Ascending aorta (tissue), 2 donors: ENCODE measurements at regions of chr3 and their contacts with region 1.

Region 1: DNA sequence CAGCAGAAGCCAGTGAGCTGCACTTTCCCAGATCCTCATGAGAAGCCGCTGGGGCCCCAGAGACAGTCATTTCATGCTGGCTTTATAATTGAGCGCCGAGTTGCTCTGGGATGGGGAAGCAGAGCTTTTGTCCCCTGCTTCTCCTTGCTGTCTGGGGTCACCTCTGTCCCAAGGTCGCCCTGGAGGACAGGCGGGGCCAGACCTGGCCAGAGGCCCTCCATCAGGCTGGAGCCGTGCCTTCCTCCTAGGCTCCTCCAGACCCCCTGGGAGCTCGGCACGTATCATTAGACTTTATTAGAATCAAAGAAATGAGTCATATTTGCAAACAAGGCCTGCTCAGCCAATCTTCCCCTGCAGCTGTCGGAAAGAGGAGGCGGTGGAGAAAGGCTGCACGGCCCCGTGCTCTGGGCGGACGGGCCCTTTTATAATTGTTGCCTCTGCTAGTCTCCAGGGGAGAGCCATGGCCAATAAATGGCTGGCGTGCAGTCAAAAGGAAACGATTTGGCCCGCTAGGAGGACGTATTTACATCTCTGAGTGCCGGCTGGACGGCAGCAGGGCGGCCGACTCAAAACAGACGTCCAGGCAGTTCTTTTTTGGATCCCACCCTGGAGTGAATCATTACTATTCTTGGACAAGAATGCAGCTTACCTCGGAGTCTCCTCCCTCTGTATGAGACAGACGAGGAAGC is 50.4 kb downstream of the SLC6A6 start:
- DNase-seq: peak; percentile 88 to 96
- H3K4me3 ChIP-seq: peak overlapping the region in 1 of 2 donors; percentile 2
- H3K27ac ChIP-seq: peak overlapping the region; percentile 77 to 91
- H3K4me1 ChIP-seq: peaks cover 14 to 26% of the 10 kb centered on the region in 2 donors
- H3K27me3 ChIP-seq: no peaks in the 10 kb centered on the region
- CTCF ChIP-seq: no peak

Region 2: DNA sequence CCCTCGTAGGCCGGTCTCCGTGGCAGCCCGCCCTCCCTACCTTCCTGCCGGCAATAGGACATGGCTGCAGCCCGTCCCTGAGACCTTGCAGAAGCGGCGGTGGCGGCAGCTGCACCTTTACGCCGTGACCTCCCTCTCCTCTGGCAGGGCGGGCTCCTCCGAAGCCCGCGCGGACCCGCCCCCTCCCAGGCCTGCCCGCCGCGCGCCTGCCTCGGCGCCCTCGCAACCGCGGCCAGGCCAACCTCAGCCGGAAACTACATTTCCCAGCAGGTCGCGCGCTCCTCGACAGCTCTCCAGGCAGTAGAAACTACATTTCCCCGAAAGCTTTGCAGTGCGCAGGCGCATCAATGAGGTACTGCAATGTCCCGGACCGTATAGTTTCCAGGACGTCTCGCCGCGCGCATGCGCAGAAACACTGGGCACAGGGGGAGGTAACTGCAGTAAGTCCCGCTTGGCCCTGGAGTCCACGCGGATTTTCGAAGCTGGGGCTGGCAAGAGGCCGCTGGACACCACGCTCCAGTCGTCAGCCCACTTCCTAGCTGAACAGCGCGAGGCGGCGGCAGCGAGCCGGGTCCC is 328.1 kb before region 1 on chr3 and contains the starts of genes CHCHD4 and TMEM43:
- intact Hi-C with region 1: loop called (anchors 5 kb)
- DNase-seq: peak; percentile 98 to 100
- H3K4me3 ChIP-seq: peak within 1 kb of the TSS; percentile 84 to 100
- H3K27ac ChIP-seq: peak within 1 kb of the TSS; percentile 96 to 98
- H3K4me1 ChIP-seq: peaks cover 19 to 26% of the 10 kb centered on the region in 2 donors
- H3K27me3 ChIP-seq: no peaks in the 10 kb centered on the region
- CTCF ChIP-seq: peak in 1 of 3 experiments; percentile 2
- total RNA-seq, gene CHCHD4: 1.9 TPM
- total RNA-seq, gene TMEM43: 166 TPM

Region 3: DNA sequence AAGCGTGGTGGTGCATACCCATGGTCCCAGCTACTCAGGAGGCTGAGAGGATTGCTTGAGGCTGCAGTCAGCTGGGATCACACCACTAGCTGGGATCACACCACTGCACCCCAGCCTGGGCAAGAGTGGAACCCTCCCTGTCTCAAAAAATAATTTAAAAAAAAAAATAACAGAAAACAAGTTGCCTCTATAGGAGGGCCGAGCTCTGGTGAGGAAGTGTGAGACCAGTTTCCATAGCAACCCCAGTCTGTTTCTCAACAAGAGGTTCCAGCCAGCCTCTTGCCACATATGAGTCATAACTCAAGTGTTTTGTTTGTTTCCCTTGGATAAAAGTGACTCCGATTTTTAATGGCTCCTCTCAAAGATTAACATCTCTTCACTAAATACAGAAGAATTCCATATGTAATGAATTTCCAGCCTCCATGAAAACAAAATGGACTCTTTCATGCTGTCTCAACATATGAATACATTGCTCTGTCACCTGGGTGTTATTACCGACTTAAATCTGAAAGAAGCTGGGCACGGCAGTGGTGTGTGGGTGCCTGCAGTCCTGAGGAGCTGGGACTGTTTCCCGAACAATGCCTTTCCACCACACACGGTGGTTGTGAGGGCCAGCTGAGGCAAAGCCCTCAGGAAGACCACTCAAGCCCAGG is 308.3 kb before region 1 on chr3:
- intact Hi-C with region 1: loop called (anchors 5 kb)
- DNase-seq: peak; percentile 70 to 93
- H3K4me3 ChIP-seq: peak overlapping the region; percentile 33 to 38
- H3K27ac ChIP-seq: peak overlapping the region; percentile 89 to 91
- H3K4me1 ChIP-seq: peaks cover 31 to 49% of the 10 kb centered on the region in 2 donors
- H3K27me3 ChIP-seq: no peaks in the 10 kb centered on the region
- CTCF ChIP-seq: no peak

Region 4: GRCh38 chr3:14402304-14402811 is 50.5 kb before region 1 on chr3 and contains the start of gene SLC6A6:
- intact Hi-C with region 1: loop called (anchors 1 kb)
- DNase-seq: peak; percentile 88 to 98
- H3K4me3 ChIP-seq: peak within 1 kb of the TSS; percentile 62 to 85
- H3K27ac ChIP-seq: peak within 1 kb of the TSS; percentile 77 to 85
- H3K4me1 ChIP-seq: peaks cover 25 to 33% of the 10 kb centered on the region in 2 donors
- H3K27me3 ChIP-seq: no peaks in the 10 kb centered on the region
- CTCF ChIP-seq: peak in 2 of 3 experiments; percentile 39 to 52
- total RNA-seq, gene SLC6A6: 78.1 TPM

Region 5: GRCh38 chr3:14418296-14419250 is 34.2 kb before region 1 on chr3:
- intact Hi-C with region 1: no loop called
- DNase-seq: no peak
- H3K4me3 ChIP-seq: no peak overlapping the region
- H3K27ac ChIP-seq: no peak overlapping the region
- H3K4me1 ChIP-seq: no peaks in the 10 kb centered on the region
- H3K27me3 ChIP-seq: no peaks in the 10 kb centered on the region
- CTCF ChIP-seq: no peak

Region 6: GRCh38 chr3:14431892-14432834 is 20.7 kb before region 1 on chr3:
- intact Hi-C with region 1: loop called (anchors 1 kb)
- DNase-seq: peak; percentile 90 to 96
- H3K4me3 ChIP-seq: no peak overlapping the region
- H3K27ac ChIP-seq: peak overlapping the region; percentile 77 to 82
- H3K4me1 ChIP-seq: peaks cover 25% of the 10 kb centered on the region in 2 donors
- H3K27me3 ChIP-seq: no peaks in the 10 kb centered on the region
- CTCF ChIP-seq: no peak